Activated naive CD4-positive, alpha-beta T cell treated with anti-CD3 and anti-CD28 coated beads for 36 hours (primary cell): ENCODE measurements at regions of chr3 and their contacts with region 1.

Region 1: DNA sequence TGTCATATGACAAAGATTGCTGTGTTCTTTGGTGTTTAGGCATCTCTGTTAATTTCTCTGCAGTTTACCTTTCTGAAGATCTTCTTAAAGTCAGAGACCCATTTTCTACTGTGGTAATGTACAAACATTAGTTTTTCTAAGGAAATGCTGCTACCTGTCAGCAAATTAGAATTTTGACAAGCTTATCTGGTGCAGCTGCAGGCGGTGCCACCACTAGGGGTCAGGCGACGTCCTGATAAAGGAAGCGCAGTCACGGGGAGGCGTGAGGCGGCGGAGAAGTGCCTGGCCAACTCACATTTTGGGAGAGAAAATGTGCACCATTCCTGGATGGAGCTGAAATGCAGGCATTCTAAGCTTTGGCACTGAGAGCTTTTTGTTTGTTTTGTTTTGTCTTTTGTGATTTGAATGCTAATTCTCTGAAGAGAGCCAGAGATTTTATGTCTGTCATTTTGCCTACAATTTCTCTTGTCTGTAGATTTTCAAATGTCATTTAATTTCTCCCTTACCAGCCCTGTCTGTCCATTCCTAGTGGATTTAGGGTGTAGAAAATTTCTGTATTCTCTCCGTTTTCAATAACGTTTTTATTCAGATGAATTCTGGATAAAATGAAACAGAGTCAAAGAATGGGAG is 24.9 kb upstream of the SIAH2 start:
- DNase-seq: peak; percentile 93
- H3K4me3 Mint-ChIP-seq: no peak overlapping the region
- H3K27ac Mint-ChIP-seq: no peak overlapping the region
- H3K4me1 Mint-ChIP-seq: peaks cover 49% of the 10 kb centered on the region
- H3K27me3 Mint-ChIP-seq: peaks cover 6% of the 10 kb centered on the region

Region 2: DNA sequence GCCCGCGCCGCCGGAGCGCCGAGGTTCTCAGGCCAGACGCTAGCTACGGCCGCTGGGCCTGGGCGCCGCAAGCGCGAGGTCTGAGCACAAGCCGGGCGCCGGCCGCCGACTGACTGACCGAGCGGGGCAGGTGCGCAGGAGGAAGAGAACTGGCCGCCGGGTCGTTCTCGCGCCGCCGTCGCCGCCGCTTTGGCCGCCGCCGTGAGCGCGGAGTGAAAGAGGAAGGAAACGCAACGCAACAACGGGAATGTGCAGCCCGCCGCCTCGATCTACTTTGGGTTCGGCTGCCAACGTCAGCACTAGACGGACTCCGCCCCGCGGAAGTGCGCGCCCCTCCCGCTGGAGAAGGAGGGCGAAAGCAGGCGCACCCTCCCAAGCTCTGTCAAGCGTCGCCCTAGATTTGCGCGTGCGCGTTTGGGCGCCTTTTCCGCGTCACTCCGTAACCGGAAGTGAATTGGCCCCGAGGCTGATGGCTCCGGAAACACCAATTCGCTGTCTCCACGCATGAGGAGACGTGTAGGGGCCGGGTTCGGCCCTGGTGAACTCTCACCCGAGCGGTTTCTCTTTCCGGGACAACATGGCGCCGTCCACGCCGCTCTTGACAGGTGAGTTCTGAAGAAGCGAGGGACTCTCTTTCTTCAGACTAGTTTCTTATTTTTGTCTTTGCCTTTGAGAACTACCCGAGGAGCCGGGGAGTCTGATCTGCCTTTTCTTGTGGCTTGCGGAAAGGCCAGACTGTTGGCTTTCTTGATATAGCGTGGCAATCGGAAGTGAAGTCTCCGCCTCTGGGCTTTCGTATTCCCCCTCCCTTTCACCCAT is 241.4 kb before region 1 on chr3 and contains the starts of genes EIF2A and SERP1:
- CTCF ChIA-PET with region 1: interaction called, 3 read pairs
- intact Hi-C with region 1: loop called (anchors 1 kb)
- DNase-seq: peak; percentile 99
- H3K4me3 Mint-ChIP-seq: peak within 1 kb of the TSS; percentile 97
- H3K27ac Mint-ChIP-seq: peak within 1 kb of the TSS; percentile 95
- H3K4me1 Mint-ChIP-seq: peaks cover 69% of the 10 kb centered on the region
- H3K27me3 Mint-ChIP-seq: no peaks in the 10 kb centered on the region
- total RNA-seq, gene EIF2A: 133 to 135 TPM
- total RNA-seq, gene SERP1: 95.9 to 105 TPM

Region 3: GRCh38 chr3:150681057-150681456 is 106.8 kb before region 1 on chr3:
- CTCF ChIA-PET with region 1: no interaction called
- intact Hi-C with region 1: loop called (anchors 1 kb)
- DNase-seq: peak; percentile 23
- H3K4me3 Mint-ChIP-seq: no peak overlapping the region
- H3K27ac Mint-ChIP-seq: peak overlapping the region; percentile 31
- H3K4me1 Mint-ChIP-seq: peaks cover 16% of the 10 kb centered on the region
- H3K27me3 Mint-ChIP-seq: no peaks in the 10 kb centered on the region

Region 4: GRCh38 chr3:150840802-150841515 is 53.1 kb after region 1 on chr3:
- CTCF ChIA-PET with region 1: interaction called, 11 read pairs
- intact Hi-C with region 1: no loop called
- DNase-seq: no peak
- H3K4me3 Mint-ChIP-seq: no peak overlapping the region
- H3K27ac Mint-ChIP-seq: no peak overlapping the region
- H3K4me1 Mint-ChIP-seq: no peaks in the 10 kb centered on the region
- H3K27me3 Mint-ChIP-seq: peaks cover 9% of the 10 kb centered on the region

Region 5: GRCh38 chr3:151086484-151087456 is 298.9 kb after region 1 on chr3:
- CTCF ChIA-PET with region 1: no interaction called
- intact Hi-C with region 1: loop called (anchors 1 kb)
- DNase-seq: peak; percentile 87
- H3K4me3 Mint-ChIP-seq: peak overlapping the region; percentile 82
- H3K27ac Mint-ChIP-seq: no peak overlapping the region
- H3K4me1 Mint-ChIP-seq: peaks cover 9% of the 10 kb centered on the region
- H3K27me3 Mint-ChIP-seq: peaks cover 46% of the 10 kb centered on the region

Region 6: GRCh38 chr3:151101270-151101969 is 313.6 kb after region 1 on chr3:
- CTCF ChIA-PET with region 1: no interaction called
- intact Hi-C with region 1: no loop called
- DNase-seq: no peak
- H3K4me3 Mint-ChIP-seq: no peak overlapping the region
- H3K27ac Mint-ChIP-seq: no peak overlapping the region
- H3K4me1 Mint-ChIP-seq: no peaks in the 10 kb centered on the region
- H3K27me3 Mint-ChIP-seq: peaks cover 18% of the 10 kb centered on the region

Region 7: DNA sequence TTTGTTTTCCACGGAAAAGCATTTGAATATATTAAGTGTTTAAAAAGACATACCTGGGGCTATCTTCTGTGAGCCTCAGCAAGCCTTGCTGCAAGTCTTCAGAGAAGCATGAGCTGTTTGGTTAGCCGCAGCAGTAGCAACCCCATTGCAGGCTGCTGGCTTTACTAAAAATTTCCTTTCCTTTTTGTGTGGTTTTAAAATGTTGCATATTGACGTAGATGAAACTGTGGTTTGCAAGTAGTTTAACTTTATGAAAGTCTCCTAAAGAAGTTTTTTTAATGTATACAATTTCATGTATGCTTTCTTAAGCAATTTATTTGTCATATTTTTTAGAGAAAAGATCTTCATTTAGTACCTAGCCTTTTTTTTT is 415.2 kb after region 1 on chr3 and contains the start of gene GPR171:
- CTCF ChIA-PET with region 1: interaction called, 4 read pairs
- intact Hi-C with region 1: loop called (anchors 1 kb)
- DNase-seq: peak; percentile 81
- H3K4me3 Mint-ChIP-seq: peak within 1 kb of the TSS; percentile 94
- H3K27ac Mint-ChIP-seq: peak within 1 kb of the TSS; percentile 100
- H3K4me1 Mint-ChIP-seq: peaks cover 60% of the 10 kb centered on the region
- H3K27me3 Mint-ChIP-seq: no peaks in the 10 kb centered on the region
- total RNA-seq, gene GPR171: 42.8 to 46.9 TPM